ENCODE measurements at regions of chr15 and their contacts with region 1.

Region 1: DNA sequence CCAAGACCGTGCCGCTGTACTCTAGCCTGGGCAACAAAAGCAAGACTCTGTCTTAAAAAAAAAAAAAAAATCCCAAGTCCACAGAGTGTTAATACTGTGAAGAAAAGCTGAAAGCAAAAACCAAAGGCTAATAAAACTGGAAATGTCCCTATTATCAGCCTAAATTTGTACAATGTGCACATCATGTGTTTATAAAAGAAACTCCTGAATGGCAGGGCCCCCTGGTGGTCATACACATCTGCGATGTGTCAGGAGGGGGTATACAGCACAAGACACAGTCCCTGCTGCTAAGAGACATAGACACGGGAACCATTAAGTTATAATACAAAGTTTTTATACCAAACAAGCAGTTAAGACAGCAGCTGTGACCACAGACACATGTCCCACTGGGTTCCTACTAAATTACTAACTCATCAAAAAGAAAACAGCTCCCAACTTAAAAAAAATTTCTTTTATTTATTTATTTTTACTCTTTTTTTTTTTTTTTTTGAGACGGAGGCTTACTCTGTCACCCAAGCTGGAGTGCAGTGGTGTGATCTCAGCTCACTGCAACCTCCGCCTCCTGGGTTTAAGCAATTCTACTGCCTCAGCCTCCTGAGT is 31.0 kb downstream of the IDH2 start:
- DNase-seq: peak; percentile 92
- H3K4me3 Mint-ChIP-seq: no peak overlapping the region
- H3K27ac Mint-ChIP-seq: no peak overlapping the region
- H3K4me1 Mint-ChIP-seq: peaks cover 12% of the 10 kb centered on the region
- H3K27me3 Mint-ChIP-seq: no peaks in the 10 kb centered on the region

Region 2: DNA sequence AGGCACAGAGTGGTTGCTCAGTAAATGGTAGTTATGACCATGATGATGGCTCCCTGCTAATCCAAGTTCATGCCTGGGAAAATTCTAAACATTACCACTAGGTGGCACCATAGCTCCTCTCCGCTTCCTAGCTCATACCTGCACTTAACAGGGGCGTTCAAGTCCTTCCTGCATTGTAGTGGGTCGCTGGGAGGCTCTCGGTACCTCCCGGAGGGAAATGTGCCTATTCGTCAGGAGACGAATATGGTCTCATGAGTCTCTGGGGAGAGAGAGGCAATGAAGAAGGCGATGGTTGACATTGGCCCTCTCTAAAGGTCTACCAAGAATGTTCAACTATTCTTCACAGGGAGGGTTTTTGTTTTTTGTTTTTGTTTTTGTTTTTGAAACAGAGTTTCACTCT is 331.2 kb before region 1 on chr15:
- CTCF ChIA-PET with region 1: interaction called, 5 read pairs
- intact Hi-C with region 1: loop called (anchors 5 kb)
- DNase-seq: peak; percentile 71
- H3K4me3 Mint-ChIP-seq: no peak overlapping the region
- H3K27ac Mint-ChIP-seq: no peak overlapping the region
- H3K4me1 Mint-ChIP-seq: peaks cover 1% of the 10 kb centered on the region
- H3K27me3 Mint-ChIP-seq: peaks cover 11% of the 10 kb centered on the region

Region 3: DNA sequence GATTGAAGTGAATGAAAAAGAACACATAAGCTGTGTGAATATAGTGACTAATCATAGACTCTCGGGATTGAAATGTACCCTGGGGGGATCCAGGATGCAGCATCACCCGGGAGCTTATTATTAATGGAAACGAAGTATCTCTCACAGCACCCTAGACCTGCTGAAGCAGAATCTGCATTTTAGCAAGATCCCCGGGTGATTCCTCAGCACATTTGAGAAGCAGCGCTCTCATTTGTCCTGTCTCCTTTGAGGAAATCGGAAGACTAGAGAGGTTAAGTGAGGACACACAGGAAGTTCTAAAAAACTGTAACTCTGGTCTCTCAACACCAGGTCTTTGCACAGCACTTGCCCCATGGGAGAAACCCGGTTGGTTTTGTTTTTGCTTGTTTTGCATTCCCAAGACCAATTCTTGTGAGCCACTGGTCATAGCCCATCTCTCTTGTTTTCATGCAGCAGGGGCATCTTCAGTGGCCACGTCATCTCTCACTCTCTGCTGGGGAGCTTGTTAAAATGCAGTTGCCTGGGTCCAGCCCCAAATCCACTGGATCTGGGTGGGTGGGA is 40.0 kb before region 1 on chr15:
- CTCF ChIA-PET with region 1: interaction called, 6 read pairs
- intact Hi-C with region 1: loop called (anchors 1 kb)
- DNase-seq: peak; percentile 57
- H3K4me3 Mint-ChIP-seq: no peak overlapping the region
- H3K27ac Mint-ChIP-seq: peak overlapping the region; percentile 59
- H3K4me1 Mint-ChIP-seq: peaks cover 50% of the 10 kb centered on the region
- H3K27me3 Mint-ChIP-seq: no peaks in the 10 kb centered on the region

Region 4: GRCh38 chr15:90086868-90087268 is 15.6 kb after region 1 on chr15:
- CTCF ChIA-PET with region 1: interaction called, 11 read pairs
- intact Hi-C with region 1: loop called (anchors 1 kb)
- DNase-seq: peak; percentile 73
- H3K4me3 Mint-ChIP-seq: no peak overlapping the region
- H3K27ac Mint-ChIP-seq: no peak overlapping the region
- H3K4me1 Mint-ChIP-seq: peaks cover 6% of the 10 kb centered on the region
- H3K27me3 Mint-ChIP-seq: no peaks in the 10 kb centered on the region